OCI-LY7 (cell line): ENCODE measurements at regions of chr12 and their contacts with region 1.

Region 1: DNA sequence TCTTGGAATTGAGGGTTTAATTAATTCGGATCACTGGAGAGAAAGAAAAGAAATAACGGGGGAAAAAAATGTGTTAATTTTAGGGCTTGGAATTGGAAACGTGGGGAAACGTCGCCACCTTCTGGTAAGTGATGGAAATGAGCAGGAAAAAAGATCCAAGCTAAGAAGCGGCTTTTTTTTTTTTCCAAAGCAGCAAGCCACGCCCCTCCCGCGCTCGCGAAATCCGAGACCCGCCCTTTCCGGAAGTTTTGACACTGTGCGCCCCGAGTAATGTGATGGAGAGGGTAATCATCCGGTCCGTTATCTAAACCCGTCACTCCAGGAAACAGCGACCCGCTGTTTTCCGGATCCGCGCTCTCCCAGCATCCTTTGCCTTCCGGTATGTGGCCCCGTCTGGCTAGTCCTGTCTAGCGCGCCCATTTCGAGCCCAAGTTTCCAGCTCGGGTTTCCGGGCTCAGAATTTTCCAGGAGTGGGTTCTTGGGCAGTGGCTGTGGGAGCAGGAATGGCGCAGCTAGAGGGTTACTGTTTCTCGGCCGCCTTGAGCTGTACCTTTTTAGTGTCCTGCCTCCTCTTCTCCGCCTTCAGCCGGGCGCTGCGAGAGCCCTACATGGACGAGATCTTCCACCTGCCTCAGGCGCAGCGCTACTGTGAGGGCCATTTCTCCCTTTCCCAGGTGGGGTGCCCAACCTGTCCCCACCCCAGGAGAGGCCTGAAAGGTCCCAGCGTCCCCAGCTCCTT is at the start of gene ALG10B:
- DNase-seq: peak; percentile 96
- H3K4me3 ChIP-seq: peak within 1 kb of the TSS; percentile 94
- H3K27ac ChIP-seq: peak within 1 kb of the TSS; percentile 57
- H3K4me1 ChIP-seq: peaks cover 9% of the 10 kb centered on the region
- CTCF ChIP-seq: peak; percentile 82
- total RNA-seq, gene ALG10B: 11.2 and 16.8 TPM in 2 replicates

Region 2: DNA sequence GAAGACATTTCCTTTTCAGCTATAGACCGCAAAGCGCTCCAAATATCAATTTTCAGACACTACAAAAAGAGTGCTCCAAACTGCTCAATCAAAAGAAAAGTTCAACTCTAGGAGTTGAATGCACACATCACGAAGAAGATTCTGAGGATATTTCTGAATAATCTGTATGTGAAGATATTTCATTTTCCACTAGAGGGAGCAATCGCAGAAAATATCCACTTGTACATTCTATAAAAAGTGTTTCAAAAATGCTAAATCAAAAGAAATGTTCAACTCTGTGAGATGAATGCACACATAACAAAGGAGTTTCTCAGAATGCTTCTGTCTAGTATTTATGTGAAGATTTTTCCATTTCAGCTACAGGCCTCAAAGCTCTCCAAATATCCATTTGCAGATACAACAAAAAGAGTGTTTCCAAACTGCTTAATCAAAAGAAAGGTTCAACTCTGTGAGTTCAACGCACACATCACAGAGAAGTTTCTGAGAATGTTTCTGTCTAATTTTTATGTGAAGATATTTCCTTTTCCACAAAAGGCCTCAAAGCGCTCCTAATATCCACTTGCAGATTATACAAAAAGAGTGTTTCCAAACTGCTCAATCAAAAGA is 643.8 kb before region 1 on chr12:
- CTCF ChIA-PET with region 1: no interaction called
- POLR2A ChIA-PET with region 1: no interaction called
- intact Hi-C with region 1: loop called (anchors 1 kb)
- DNase-seq: peak; percentile 0
- H3K4me3 ChIP-seq: no peak overlapping the region
- H3K27ac ChIP-seq: no peak overlapping the region
- H3K4me1 ChIP-seq: no peaks in the 10 kb centered on the region
- CTCF ChIP-seq: peak; percentile 75

Region 3: DNA sequence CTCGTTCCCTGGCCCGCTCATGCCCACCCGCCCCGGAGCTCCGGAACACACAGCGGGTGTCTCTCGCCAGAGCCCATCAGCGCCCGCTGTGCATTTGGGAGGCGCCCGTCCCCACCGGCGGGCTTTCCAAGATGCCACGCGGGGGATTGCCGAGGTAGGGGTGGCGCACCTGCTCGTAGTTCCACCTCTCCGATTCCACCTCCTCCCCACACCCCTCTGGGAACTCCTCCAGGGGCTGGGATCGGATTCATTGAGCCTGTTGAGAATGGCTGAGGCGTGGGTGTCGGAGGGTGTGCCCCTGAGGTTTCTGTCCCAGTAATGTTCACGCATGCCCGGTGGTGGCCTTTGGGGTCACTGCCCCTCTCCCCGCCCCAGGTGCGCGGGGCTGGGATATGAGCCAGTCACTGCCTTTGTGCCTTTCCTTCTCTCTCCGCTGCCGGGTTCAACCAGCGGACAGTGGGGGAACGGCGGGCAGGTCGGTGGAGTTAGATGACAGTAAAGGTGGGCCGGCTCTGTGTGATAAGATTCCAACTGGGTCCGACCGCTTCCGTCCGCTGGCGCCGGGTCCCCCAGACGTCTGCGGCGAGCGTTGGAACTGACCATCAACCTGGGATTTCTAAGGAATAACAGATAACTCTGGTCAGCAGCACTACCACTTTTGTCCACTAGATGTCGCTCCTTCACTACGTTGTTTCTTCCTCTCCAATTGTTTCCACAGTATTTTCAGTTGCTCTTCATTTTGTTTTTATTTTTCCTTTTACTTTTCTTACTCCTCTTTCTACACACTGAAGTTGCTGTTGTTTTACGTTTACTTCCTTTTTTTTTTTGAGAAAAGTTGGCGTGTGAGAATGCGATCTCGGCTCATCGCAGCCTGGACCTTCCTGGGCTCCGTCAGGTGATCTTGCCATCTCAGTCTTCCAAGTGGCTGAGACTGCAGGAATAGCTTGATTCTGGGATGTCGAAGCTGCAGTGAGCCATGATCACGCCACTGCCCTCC is 178.0 kb before region 1 on chr12:
- CTCF ChIA-PET with region 1: no interaction called
- POLR2A ChIA-PET with region 1: interaction called, 7 read pairs
- intact Hi-C with region 1: loop called (anchors 1 kb)
- DNase-seq: peak; percentile 49
- H3K4me3 ChIP-seq: no peak overlapping the region
- H3K27ac ChIP-seq: no peak overlapping the region
- H3K4me1 ChIP-seq: no peaks in the 10 kb centered on the region
- CTCF ChIP-seq: peak; percentile 89